Breast epithelium (tissue), 4 donors: ENCODE measurements at regions of chr18 and their contacts with region 1.

Region 1: GRCh38 chr18:5955861-5956260 is 60.5 kb upstream of the TMEM200C start:
- DNase-seq: no peak
- H3K4me3 ChIP-seq: no peak overlapping the region
- H3K27ac ChIP-seq: no peak overlapping the region
- H3K4me1 ChIP-seq: no peaks in the 10 kb centered on the region
- H3K27me3 ChIP-seq: no peaks in the 10 kb centered on the region
- CTCF ChIP-seq: no peak
- POLR2A ChIP-seq: no peak

Region 2: GRCh38 chr18:5173646-5174045 is 782.2 kb before region 1 on chr18:
- intact Hi-C with region 1: loop called (anchors 5 kb)
- DNase-seq: no peak
- H3K4me3 ChIP-seq: no peak overlapping the region
- H3K27ac ChIP-seq: no peak overlapping the region
- H3K4me1 ChIP-seq: no peaks in the 10 kb centered on the region
- H3K27me3 ChIP-seq: no peaks in the 10 kb centered on the region
- CTCF ChIP-seq: no peak
- POLR2A ChIP-seq: no peak